B cell (primary cell): ENCODE measurements at regions of chr1 and their contacts with region 1.

Region 1: DNA sequence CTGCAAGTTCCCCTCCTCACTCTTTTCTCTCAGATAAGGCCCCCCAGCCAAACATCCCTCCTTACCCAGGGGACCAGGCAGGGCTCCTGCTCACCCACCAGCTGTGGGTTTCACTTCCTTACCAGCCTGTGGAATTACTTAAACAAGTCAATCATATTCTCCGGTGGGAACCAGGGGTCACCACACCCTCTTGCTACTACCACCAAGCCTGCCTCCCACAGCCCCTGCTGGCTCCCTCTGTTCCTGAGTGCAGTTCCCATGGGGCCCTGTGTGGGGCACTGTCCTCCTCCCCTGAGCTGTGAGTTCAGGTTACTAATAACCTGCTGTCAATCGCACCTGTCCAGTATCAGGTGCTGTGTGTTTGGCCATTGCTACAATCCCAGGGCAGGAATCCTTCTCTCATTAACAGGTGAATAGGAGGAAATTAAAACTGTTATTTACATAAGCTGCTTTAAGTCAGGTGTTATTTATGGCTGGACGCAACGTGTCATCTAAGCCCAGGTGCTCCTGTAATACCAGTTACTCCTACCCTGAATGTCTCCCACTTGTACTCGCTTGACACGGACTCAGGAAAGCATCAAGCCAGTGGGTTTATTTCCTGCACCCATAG is 53.1 kb upstream of the LBR start:
- DNase-seq: peak; percentile 84
- ATAC-seq: peak; percentile 88
- H3K4me3 ChIP-seq: peak overlapping the region in 1 of 5 experiments; percentile 4
- H3K4me3 Mint-ChIP-seq: peak overlapping the region; percentile 67
- H3K27ac ChIP-seq: peak overlapping the region; percentile 17 to 50
- H3K27ac Mint-ChIP-seq: peak overlapping the region; percentile 69
- H3K4me1 ChIP-seq: peaks cover 45 to 53% of the 10 kb centered on the region in 2 donors
- H3K4me1 Mint-ChIP-seq: peaks cover 58% of the 10 kb centered on the region
- H3K27me3 ChIP-seq: no peaks in the 10 kb centered on the region
- H3K27me3 Mint-ChIP-seq: no peaks in the 10 kb centered on the region
- CTCF ChIP-seq: peak; percentile 90

Region 2: DNA sequence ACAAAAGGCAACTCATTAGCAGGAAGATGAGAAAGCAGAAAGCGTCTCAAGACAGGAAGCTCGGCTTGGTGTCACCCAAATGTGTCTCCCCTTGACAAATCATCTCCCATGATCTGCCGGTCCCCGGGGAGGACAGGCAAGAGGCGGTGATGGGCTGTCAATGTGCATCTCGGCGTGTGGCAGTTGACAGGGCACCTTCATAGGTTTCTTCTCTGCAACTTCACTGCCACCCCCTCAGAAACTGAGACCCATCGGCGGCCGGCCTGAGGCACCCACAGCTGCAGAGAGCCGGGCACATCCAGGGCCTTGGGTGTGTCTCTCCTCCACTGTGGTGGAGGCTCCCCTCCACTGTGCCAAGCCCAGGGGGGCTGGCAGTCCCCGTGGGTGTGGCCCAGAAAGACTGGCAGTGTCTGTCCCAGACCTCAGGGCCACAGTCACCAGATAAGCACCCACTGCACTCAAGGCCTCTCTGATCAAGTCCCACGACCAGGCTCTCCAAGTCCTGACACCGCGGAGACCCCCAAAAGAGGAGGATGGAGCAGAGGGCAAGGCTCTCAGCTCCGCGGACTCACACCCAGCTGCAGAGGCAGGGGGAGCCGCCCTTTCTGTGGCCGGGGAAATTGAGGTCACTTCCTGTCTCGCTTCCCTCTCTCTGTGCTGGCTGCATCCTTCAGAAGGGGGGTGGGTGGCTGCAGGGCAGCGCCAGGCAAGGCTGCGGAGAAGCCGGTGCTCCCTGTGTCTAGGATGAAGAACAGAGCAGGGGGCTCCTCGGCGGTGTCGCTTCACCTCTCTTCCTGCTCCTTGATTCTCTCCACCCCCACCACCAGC is 13.5 kb before region 1 on chr1:
- CTCF ChIA-PET with region 1: interaction called, 9 read pairs
- POLR2A ChIA-PET with region 1: interaction called, 3 read pairs
- intact Hi-C with region 1: loop called (anchors 1 kb)
- DNase-seq: peak; percentile 92
- ATAC-seq: peak; percentile 88
- H3K4me3 ChIP-seq: peak overlapping the region; percentile 68 to 83 (median 73)
- H3K4me3 Mint-ChIP-seq: peak overlapping the region; percentile 91
- H3K27ac ChIP-seq: peak overlapping the region; percentile 82 to 97
- H3K27ac Mint-ChIP-seq: peak overlapping the region; percentile 97
- H3K4me1 ChIP-seq: peaks cover 15 to 34% of the 10 kb centered on the region in 2 donors
- H3K4me1 Mint-ChIP-seq: peaks cover 37% of the 10 kb centered on the region
- H3K27me3 ChIP-seq: no peaks in the 10 kb centered on the region
- H3K27me3 Mint-ChIP-seq: no peaks in the 10 kb centered on the region
- CTCF ChIP-seq: no peak

Region 3: GRCh38 chr1:225498549-225499136 is 17.7 kb after region 1 on chr1:
- CTCF ChIA-PET with region 1: interaction called, 13 read pairs
- POLR2A ChIA-PET with region 1: no interaction called
- intact Hi-C with region 1: no loop called
- DNase-seq: no peak
- ATAC-seq: no peak
- H3K4me3 ChIP-seq: no peak overlapping the region
- H3K4me3 Mint-ChIP-seq: no peak overlapping the region
- H3K27ac ChIP-seq: no peak overlapping the region
- H3K27ac Mint-ChIP-seq: no peak overlapping the region
- H3K4me1 ChIP-seq: peaks cover 0 to 9% of the 10 kb centered on the region in 2 donors
- H3K4me1 Mint-ChIP-seq: peaks cover 7% of the 10 kb centered on the region
- H3K27me3 ChIP-seq: no peaks in the 10 kb centered on the region
- H3K27me3 Mint-ChIP-seq: no peaks in the 10 kb centered on the region
- CTCF ChIP-seq: no peak

Region 4: GRCh38 chr1:225554216-225554812 is 73.4 kb after region 1 on chr1:
- CTCF ChIA-PET with region 1: interaction called, 11 read pairs
- POLR2A ChIA-PET with region 1: no interaction called
- intact Hi-C with region 1: loop called (anchors 2 kb)
- DNase-seq: peak; percentile 39
- ATAC-seq: no peak
- H3K4me3 ChIP-seq: no peak overlapping the region
- H3K4me3 Mint-ChIP-seq: no peak overlapping the region
- H3K27ac ChIP-seq: no peak overlapping the region
- H3K27ac Mint-ChIP-seq: no peak overlapping the region
- H3K4me1 ChIP-seq: no peaks in the 10 kb centered on the region
- H3K4me1 Mint-ChIP-seq: no peaks in the 10 kb centered on the region
- H3K27me3 ChIP-seq: no peaks in the 10 kb centered on the region
- H3K27me3 Mint-ChIP-seq: peaks cover 3% of the 10 kb centered on the region
- CTCF ChIP-seq: peak; percentile 78

Region 5: DNA sequence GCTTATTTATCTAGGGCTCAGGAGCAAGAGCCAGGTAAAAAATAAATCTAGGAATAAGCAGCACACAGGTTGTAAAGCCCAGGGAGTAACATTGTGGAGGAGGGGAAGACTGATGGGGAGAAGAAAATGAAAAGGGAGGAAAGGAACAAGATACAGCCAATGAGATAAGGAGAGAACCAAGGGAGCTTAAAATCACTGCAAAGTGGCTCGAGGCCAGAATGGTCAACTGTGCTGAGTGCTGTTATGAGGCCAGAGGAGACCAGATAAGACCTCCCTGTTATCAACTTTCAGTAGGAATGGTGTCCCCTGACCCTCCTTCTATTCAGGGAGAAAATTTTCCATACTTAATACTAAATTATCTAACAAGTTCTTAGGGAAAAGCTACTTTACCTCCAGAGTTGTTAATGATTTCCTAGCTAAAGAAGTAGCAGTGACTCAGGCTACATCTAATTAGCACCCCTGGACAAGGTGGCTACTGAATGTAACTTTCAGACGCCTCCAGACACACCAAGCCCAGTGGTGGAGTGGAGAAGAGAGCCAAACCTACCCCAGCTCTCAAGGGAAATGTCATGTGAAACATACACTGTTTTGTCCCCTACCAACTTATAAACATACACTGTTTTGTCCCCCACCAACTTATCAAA is 146.5 kb after region 1 on chr1:
- CTCF ChIA-PET with region 1: no interaction called
- POLR2A ChIA-PET with region 1: no interaction called
- intact Hi-C with region 1: no loop called
- DNase-seq: no peak
- ATAC-seq: no peak
- H3K4me3 ChIP-seq: no peak overlapping the region
- H3K4me3 Mint-ChIP-seq: no peak overlapping the region
- H3K27ac ChIP-seq: no peak overlapping the region
- H3K27ac Mint-ChIP-seq: no peak overlapping the region
- H3K4me1 ChIP-seq: no peaks in the 10 kb centered on the region
- H3K4me1 Mint-ChIP-seq: no peaks in the 10 kb centered on the region
- H3K27me3 ChIP-seq: no peaks in the 10 kb centered on the region
- H3K27me3 Mint-ChIP-seq: peaks cover 12% of the 10 kb centered on the region
- CTCF ChIP-seq: no peak

Region 6: GRCh38 chr1:225772323-225772768 is 291.4 kb after region 1 on chr1:
- CTCF ChIA-PET with region 1: interaction called, 22 read pairs
- POLR2A ChIA-PET with region 1: no interaction called
- intact Hi-C with region 1: no loop called
- DNase-seq: peak; percentile 51
- ATAC-seq: peak; percentile 60
- H3K4me3 ChIP-seq: no peak overlapping the region
- H3K4me3 Mint-ChIP-seq: no peak overlapping the region
- H3K27ac ChIP-seq: no peak overlapping the region
- H3K27ac Mint-ChIP-seq: no peak overlapping the region
- H3K4me1 ChIP-seq: peaks cover 9 to 10% of the 10 kb centered on the region in 2 donors
- H3K4me1 Mint-ChIP-seq: peaks cover 3% of the 10 kb centered on the region
- H3K27me3 ChIP-seq: no peaks in the 10 kb centered on the region
- H3K27me3 Mint-ChIP-seq: no peaks in the 10 kb centered on the region
- CTCF ChIP-seq: no peak

Region 7: DNA sequence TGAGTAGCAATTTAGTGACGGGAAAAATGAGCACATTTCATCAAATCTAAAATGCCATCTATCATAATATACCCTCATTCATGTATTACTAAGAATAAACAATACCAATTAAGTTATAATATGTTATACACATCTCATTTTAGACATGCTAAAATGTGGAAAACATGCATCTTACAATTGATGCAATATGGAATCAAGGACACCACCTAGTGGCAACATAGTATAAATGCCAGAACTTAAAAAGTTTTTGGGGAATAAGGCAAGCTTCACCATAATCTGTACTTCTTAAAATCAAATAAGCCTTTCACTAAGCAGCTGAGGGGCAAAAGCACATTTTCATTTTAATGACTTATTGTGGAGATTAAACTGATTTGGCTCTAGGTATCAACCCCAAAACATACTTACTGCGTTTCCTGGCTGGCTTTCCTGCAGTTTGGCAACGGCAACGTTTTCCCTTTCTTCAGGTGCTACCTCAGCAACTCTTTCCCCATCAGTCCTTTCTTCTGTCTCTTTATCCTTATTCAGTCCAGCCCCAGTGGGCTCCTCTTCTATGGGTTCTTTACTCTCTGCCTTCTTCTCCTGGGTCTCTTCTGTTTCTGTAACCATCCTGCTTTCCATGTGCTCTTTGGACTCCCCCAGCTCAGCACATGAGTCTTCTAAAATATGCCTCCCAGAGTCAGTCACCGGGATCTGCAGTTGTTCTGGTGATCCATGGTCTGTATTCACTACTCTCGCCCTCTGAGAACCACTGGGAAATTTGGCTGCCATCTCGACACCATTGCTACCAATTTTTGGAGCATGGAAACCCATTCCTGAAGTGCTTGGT is 506.8 kb after region 1 on chr1:
- CTCF ChIA-PET with region 1: interaction called, 35 read pairs
- POLR2A ChIA-PET with region 1: no interaction called
- intact Hi-C with region 1: no loop called
- DNase-seq: peak; percentile 61
- ATAC-seq: peak; percentile 67
- H3K4me3 ChIP-seq: no peak overlapping the region
- H3K4me3 Mint-ChIP-seq: no peak overlapping the region
- H3K27ac ChIP-seq: no peak overlapping the region
- H3K27ac Mint-ChIP-seq: peak overlapping the region; percentile 37
- H3K4me1 ChIP-seq: peaks cover 0 to 4% of the 10 kb centered on the region in 2 donors
- H3K4me1 Mint-ChIP-seq: peaks cover 25% of the 10 kb centered on the region
- H3K27me3 ChIP-seq: no peaks in the 10 kb centered on the region
- H3K27me3 Mint-ChIP-seq: no peaks in the 10 kb centered on the region
- CTCF ChIP-seq: peak; percentile 87